Breast epithelium (tissue), 4 donors: ENCODE measurements at regions of chr6 and their contacts with region 1.

Region 1: DNA sequence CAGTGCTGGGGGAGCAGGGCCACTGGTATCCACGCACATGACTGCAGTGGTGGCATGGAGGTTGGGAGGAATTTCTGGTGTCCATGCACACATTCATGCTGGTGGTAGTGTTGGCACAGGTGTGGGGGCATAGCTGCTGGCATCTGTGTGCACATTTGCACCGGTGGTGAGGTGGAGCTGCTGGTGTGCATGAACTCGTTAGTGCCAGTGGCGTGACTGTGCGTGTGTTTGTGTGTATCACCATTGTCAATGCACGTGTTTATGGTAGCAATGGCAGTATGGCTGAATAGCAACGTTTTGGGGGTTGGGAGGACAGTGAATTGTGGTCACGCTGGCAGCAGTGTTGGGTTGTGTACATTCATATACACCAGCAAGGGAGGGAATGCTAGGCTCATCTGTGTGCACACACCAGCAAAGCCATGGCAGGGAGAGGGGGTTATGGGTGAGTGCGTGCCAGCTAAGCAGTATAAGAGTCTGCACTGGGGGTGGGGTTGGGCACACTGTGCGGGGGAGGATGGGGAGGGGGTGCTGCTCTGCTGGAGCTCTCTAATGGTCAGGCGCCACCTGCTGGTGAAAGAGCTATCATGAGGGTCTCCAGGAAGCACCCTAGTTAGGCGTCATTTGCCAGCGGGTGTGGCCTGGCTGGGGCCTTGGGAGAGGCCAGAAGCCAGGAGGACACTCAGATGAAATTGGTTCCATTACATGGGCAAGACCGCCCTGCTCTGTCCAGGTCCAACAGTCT is 626.1 kb upstream of the ID4 start:
- DNase-seq: no peak
- H3K4me3 ChIP-seq: no peak overlapping the region
- H3K27ac ChIP-seq: no peak overlapping the region
- H3K4me1 ChIP-seq: no peaks in the 10 kb centered on the region
- H3K27me3 ChIP-seq: no peaks in the 10 kb centered on the region
- CTCF ChIP-seq: no peak
- POLR2A ChIP-seq: no peak

Region 2: DNA sequence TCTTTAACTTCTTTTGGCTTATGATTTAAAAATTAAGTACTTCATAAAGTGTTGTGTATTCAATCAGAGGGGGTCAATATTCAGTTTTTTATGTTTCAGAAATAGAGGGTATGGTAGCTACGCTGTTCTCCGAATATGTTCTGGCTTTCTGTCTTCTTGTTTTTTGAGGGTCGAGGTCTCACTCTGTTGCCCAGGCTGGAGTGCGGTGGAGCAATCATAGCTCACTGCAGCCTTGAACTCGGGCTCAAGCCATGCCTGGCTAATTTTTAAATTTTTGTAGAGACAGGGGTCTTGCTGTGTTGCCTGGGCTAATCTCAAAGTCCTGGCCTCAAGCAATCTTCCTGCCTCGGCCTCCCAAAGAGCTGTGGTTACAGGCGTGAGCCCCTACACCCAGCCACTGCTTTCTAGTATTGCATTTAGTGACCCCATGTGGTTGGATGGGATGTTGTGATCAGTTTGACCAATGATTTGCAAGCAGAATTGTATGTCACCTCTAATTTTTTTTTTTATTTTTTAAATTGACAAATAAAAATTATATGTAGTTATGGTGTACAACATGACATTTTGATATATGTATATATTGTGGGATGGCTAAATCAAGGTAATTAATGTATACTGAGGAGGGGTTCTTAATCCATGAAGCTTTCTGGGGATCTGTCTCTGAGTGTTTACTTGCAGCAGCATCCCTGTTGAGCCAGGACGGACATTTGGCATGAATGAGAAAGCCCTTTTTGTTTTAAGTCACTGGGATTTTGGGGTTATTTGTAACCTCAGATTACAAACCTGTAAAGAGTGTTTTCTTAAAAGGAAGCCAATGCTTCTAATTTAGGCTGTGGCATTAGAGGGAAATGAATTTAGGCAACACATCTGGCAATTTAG is 908.2 kb before region 1 on chr6:
- intact Hi-C with region 1: loop called (anchors 10 kb)
- DNase-seq: no peak
- H3K4me3 ChIP-seq: no peak overlapping the region
- H3K27ac ChIP-seq: no peak overlapping the region
- H3K4me1 ChIP-seq: no peaks in the 10 kb centered on the region
- H3K27me3 ChIP-seq: no peaks in the 10 kb centered on the region
- CTCF ChIP-seq: no peak
- POLR2A ChIP-seq: no peak

Region 3: GRCh38 chr6:19279273-19279684 is 68.3 kb after region 1 on chr6:
- intact Hi-C with region 1: no loop called
- DNase-seq: no peak
- H3K4me3 ChIP-seq: peak overlapping the region in 2 of 3 donors; percentile 12 to 18
- H3K27ac ChIP-seq: peak overlapping the region in 1 of 2 donors; percentile 25
- H3K4me1 ChIP-seq: peaks cover 0 to 5% of the 10 kb centered on the region in 2 donors
- H3K27me3 ChIP-seq: no peaks in the 10 kb centered on the region
- CTCF ChIP-seq: no peak
- POLR2A ChIP-seq: no peak

Region 4: DNA sequence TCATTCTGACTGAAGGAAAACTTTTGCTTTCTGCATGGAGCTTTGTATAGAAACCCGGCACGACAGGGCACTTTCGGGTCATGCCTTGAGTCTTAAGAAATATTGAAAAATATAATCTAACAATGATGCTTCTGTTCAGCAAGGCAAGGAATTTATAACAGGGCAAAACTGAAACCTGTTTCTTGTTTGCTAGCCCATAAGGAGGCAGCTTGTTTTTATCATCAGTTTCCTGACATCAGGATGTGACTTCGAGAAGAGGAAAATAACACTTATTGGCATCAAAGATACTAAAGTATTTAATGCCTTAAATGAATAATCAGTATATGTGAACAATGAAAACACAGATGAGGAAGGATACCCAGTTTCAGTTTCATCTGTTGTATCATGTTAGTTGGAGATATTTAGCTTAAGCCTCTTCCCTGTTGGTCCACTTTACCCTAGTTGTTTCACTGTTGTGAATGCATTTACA is 1469.7 kb after region 1 on chr6:
- intact Hi-C with region 1: no loop called
- DNase-seq: no peak
- H3K4me3 ChIP-seq: peak overlapping the region in 1 of 3 donors; percentile 39
- H3K27ac ChIP-seq: peak overlapping the region; percentile 61 to 84
- H3K4me1 ChIP-seq: peaks cover 0 to 6% of the 10 kb centered on the region in 2 donors
- H3K27me3 ChIP-seq: no peaks in the 10 kb centered on the region
- CTCF ChIP-seq: no peak
- POLR2A ChIP-seq: no peak